Activated naive CD4-positive, alpha-beta T cell treated with anti-CD3 and anti-CD28 coated beads for 36 hours (primary cell): ENCODE measurements at regions of chr10 and their contacts with region 1.

Region 1: DNA sequence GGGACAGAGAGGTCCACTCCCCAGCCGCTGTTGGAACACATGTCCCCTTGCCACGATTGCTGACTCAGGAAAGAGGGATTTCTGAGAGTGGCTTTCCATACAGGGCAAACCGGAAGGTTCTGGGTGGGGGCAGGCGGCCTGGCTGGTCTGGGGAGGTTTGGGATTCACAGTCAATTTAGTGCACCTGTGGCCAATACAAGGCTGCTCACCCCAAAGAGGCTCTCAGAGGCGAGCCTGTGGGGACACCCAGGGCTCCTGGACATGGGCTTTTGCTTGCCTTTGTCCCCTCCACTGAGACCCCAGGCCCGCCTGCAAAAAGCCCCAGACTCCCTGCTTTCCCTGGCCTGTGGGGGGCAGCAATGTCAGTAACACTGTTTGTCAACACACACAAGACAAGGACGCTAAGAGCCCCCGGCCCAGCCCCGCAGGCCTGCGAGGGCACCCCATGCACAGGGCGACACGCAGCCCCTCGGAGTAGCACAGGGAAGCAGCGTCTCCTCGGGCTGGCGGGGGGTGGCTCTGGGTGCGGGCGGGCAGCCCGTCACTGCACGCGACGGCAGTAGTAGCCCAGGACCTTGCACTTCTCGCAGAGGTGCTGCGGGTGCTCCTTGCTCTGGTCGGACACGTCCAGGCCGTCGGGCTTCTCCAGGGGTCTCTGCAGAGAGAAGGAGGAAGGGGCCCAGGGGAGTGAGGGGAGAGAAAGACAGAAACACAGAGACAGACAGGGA is 38.7 kb downstream of the PPIF start:
- DNase-seq: no peak
- H3K4me3 Mint-ChIP-seq: no peak overlapping the region
- H3K27ac Mint-ChIP-seq: no peak overlapping the region
- H3K4me1 Mint-ChIP-seq: peaks cover 3% of the 10 kb centered on the region
- H3K27me3 Mint-ChIP-seq: no peaks in the 10 kb centered on the region

Region 2: DNA sequence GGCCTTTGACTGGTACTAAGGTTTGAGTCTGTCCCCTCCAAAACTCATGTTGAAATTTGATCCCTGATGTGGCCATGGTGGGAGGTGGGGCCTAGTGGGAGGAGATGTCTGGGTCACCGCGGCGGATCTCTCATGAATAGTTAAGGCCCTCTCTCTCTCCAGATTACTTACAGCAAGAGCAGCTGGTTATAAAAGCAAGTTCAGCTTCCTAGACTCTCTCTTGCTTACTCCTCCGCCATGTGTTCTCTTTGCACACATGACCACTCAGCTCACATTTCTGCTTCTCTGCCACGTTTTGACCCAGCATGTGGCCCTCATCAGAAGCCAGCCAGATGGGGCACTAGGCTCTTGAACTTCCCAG is 347.1 kb before region 1 on chr10:
- CTCF ChIA-PET with region 1: no interaction called
- intact Hi-C with region 1: no loop called
- DNase-seq: no peak
- H3K4me3 Mint-ChIP-seq: no peak overlapping the region
- H3K27ac Mint-ChIP-seq: no peak overlapping the region
- H3K4me1 Mint-ChIP-seq: peaks cover 15% of the 10 kb centered on the region
- H3K27me3 Mint-ChIP-seq: no peaks in the 10 kb centered on the region

Region 3: DNA sequence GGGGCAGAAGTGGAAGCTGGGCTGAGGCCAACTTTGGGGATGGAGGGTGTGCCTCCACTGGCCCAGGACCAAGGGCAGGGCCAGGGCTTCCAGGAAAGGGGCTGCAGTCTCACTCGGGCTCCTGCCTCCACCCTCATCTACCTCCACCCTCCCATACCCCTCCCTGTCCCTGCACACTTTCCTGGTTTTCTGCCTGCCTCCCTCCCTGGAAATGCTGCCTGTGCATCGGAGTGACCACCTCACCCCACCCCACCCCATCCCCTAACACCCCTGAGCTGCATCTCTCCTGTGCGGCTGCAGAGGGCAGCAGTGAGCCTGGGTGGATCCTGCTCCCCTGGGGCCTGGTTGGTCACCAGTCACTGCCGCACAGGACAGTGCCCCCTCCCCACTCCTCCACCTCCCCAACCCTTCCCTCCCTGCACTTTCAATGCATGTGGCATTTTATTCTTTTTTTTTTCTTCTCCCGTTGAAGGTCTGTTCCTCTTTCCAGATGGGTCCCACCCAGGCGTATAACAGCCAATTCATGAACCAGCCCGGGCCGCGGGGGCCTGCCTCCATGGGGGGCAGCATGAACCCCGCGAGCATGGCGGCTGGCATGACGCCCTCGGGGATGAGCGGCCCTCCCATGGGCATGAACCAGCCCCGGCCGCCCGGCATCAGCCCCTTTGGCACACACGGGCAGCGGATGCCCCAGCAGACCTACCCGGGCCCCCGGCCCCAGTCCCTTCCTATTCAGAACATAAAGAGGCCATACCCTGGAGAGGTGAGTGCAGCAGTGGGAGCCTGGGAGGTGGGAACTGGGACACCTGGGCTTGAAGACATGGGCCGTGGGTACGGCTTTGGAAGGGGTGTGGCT is 92.8 kb before region 1 on chr10:
- CTCF ChIA-PET with region 1: no interaction called
- intact Hi-C with region 1: loop called (anchors 2 kb)
- DNase-seq: peak; percentile 51
- H3K4me3 Mint-ChIP-seq: no peak overlapping the region
- H3K27ac Mint-ChIP-seq: no peak overlapping the region
- H3K4me1 Mint-ChIP-seq: peaks cover 8% of the 10 kb centered on the region
- H3K27me3 Mint-ChIP-seq: no peaks in the 10 kb centered on the region

Region 4: DNA sequence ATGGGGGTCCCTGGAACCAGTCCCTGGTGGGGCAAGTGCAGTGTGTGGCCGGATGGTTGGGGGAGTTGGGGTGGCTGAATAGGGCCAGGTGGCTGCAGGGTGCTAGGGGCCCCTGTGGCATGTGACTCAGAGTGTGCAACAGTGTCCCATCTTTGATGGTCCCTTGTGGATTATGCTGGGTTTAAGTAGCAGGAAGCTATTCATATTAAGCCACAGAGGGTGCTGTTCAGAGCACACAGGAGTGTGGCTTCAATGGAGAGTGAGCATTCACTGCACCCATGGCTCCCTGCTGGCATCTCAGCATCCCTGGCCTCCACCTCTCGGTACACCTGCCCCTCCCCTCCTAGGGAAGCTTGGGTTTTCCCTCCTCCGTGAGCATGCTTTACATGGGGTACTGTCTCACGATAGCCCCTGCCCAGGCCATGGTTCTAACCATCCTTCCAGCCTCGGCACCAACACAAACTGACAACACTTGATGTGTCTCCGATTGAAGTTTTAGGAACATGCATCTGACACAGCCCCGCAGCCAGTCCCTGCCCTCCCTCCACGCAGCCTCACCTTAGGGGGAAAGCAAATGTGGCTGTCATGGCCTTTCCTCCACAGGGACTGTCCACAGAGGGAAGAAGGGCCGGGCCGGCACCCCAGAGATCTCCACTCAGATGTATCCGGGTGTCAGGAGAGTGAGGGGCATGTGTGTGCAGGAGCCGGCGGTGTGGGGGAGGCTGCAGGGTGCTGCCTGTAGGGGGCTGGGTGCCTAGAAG is 69.1 kb before region 1 on chr10:
- CTCF ChIA-PET with region 1: no interaction called
- intact Hi-C with region 1: loop called (anchors 1 kb)
- DNase-seq: peak; percentile 47
- H3K4me3 Mint-ChIP-seq: no peak overlapping the region
- H3K27ac Mint-ChIP-seq: peak overlapping the region; percentile 56
- H3K4me1 Mint-ChIP-seq: peaks cover 60% of the 10 kb centered on the region
- H3K27me3 Mint-ChIP-seq: peaks cover 2% of the 10 kb centered on the region

Region 5: GRCh38 chr10:79374312-79375191 is 11.4 kb before region 1 on chr10:
- CTCF ChIA-PET with region 1: interaction called, 7 read pairs
- intact Hi-C with region 1: loop called (anchors 2 kb)
- DNase-seq: peak; percentile 85
- H3K4me3 Mint-ChIP-seq: no peak overlapping the region
- H3K27ac Mint-ChIP-seq: no peak overlapping the region
- H3K4me1 Mint-ChIP-seq: peaks cover 2% of the 10 kb centered on the region
- H3K27me3 Mint-ChIP-seq: no peaks in the 10 kb centered on the region

Region 6: DNA sequence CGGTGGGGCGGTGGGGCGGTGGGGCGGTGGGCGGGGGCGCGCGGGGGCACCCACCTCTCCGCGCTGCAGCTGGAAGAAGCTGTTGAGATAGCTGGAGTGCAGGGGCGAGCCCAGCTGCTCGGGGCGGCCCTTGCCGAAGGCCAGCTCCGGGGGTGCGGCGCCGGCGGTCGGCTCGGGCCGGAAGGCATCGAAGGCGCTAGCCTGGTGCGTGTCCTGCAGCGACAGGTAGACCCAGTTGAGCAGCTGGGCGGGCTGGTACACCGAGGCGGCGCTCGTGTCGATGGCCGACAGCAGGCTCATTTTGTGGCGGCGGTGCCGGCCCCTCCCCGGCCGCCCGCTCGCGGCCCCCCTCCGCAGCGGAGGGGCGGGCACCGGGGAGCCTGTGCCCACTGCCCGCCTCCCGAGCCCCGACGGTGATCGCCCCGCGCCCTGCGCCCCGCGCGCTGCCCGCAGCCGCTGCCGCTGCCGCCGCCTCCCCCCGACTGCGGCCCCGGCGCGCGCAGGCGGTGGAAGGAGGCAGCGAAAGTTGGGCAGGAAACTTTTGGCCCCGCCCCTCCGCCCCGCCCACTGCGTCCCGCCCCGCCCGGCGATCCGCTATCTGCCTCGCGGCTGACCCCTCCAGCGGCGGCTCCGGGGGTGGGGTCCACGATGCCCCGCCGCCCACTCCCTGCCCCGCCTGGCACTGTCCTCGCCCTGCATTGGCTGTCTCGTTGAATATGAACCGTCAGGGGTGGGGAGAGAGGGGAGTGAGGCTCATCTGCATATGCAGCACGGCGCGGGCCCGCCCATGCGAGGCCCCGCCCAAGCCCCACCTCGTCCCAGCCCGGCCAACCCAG is 59.4 kb after region 1 on chr10 and contains the start of gene ZCCHC24:
- CTCF ChIA-PET with region 1: no interaction called
- intact Hi-C with region 1: loop called (anchors 5 kb)
- DNase-seq: peak; percentile 92
- H3K4me3 Mint-ChIP-seq: peak within 1 kb of the TSS; percentile 70
- H3K27ac Mint-ChIP-seq: no peak within 1 kb of the TSS
- H3K4me1 Mint-ChIP-seq: peaks cover 21% of the 10 kb centered on the region
- H3K27me3 Mint-ChIP-seq: peaks cover 12% of the 10 kb centered on the region
- total RNA-seq, gene ZCCHC24: 0.52 to 0.69 TPM